ENCODE measurements at regions of chr22 and their contacts with region 1.

Region 1: GRCh38 chr22:48574776-48575565 is 1252.7 kb downstream of the BRD1 start:
- DNase-seq: no peak
- H3K4me3 ChIP-seq: no peak overlapping the region
- H3K27ac ChIP-seq: no peak overlapping the region
- H3K4me1 ChIP-seq: peaks cover 0 to 26% (median 21%) of the 10 kb centered on the region in 4 donors
- H3K27me3 ChIP-seq: peaks cover 14 to 51% (median 36%) of the 10 kb centered on the region in 3 donors
- CTCF ChIP-seq: peak in 2 of 4 experiments; percentile 15 to 26
- EP300 ChIP-seq: no peak
- POLR2A ChIP-seq: no peak

Region 2: GRCh38 chr22:48627203-48627602 is 52.2 kb after region 1 on chr22:
- intact Hi-C with region 1: no loop called
- DNase-seq: no peak
- H3K4me3 ChIP-seq: no peak overlapping the region
- H3K27ac ChIP-seq: no peak overlapping the region
- H3K4me1 ChIP-seq: no peaks in the 10 kb centered on the region
- H3K27me3 ChIP-seq: peaks cover 0 to 14% (median 0%) of the 10 kb centered on the region in 3 donors
- CTCF ChIP-seq: no peak
- EP300 ChIP-seq: no peak
- POLR2A ChIP-seq: no peak

Region 3: GRCh38 chr22:49305214-49305909 is 730.4 kb after region 1 on chr22:
- intact Hi-C with region 1: loop called (anchors 5 kb)
- DNase-seq: peak; percentile 63
- H3K4me3 ChIP-seq: no peak overlapping the region
- H3K27ac ChIP-seq: no peak overlapping the region
- H3K4me1 ChIP-seq: peaks cover 0 to 5% (median 0%) of the 10 kb centered on the region in 4 donors
- H3K27me3 ChIP-seq: peaks cover 6 to 55% (median 40%) of the 10 kb centered on the region in 3 donors
- CTCF ChIP-seq: peak; percentile 32 to 81 (median 74)
- EP300 ChIP-seq: no peak
- POLR2A ChIP-seq: no peak

Region 4: DNA sequence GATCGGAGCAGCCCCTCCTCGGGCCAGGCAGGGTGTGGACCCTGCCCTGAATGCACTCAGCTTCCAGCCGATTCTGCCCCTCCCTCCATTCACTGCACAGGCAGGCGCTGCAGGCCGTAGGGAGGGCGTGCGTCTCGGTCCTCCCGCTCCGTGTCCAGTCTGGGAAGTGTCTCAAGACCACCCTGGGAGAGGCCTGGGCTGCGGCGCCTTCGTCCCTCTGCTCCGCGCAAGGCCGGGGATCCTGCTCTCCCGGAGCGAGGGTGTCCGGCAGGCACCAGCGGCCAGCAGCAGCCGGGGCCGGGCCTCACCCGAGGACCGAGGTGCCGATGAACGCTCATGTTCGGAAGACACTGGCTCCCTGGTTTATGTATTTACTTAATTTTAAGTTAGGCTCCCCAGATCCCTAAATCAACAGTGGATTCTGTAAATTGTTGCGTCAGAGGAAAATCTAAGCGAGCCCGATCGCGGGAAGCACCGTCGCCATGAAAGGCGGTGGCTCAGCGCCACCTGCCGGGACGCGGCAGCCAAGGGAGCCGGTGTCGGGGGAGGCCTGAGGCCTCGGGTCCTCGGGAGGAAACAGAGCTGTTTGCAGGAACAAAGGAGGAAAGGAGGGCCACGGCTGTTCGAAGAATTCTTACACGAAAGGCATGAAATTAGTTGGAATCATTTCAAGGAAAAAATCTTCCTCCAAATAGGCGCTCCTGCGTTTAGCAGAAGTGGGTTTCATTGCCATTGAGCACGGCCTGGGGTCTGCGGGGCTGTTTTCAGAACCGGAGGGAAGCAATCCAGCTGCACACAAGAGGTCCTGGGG is 1057.4 kb after region 1 on chr22:
- intact Hi-C with region 1: loop called (anchors 5 kb)
- DNase-seq: peak; percentile 76
- H3K4me3 ChIP-seq: peak overlapping the region in 3 of 4 donors; percentile 24 to 41 (median 38)
- H3K27ac ChIP-seq: no peak overlapping the region
- H3K4me1 ChIP-seq: peaks cover 0 to 11% (median 8%) of the 10 kb centered on the region in 4 donors
- H3K27me3 ChIP-seq: peaks cover 0 to 11% (median 5%) of the 10 kb centered on the region in 3 donors
- CTCF ChIP-seq: peak; percentile 19 to 66 (median 52)
- EP300 ChIP-seq: no peak
- POLR2A ChIP-seq: no peak

Measured in sigmoid colon (tissue), 7 donors.